Right ventricle myocardium inferior (tissue), 1 donor: ENCODE measurements at regions of chr7 and their contacts with region 1.

Region 1: GRCh38 chr7:130356121-130356875 is 11.7 kb downstream of the CPA5 start:
- DNase-seq: no peak
- ATAC-seq: peak; percentile 40

Region 2: GRCh38 chr7:130277763-130278643 is 78.3 kb before region 1 on chr7:
- intact Hi-C with region 1: loop called (anchors 5 kb)
- DNase-seq: no peak
- ATAC-seq: peak; percentile 64

Region 3: GRCh38 chr7:130430841-130431666 is 74.8 kb after region 1 on chr7:
- intact Hi-C with region 1: loop called (anchors 5 kb)
- DNase-seq: no peak
- ATAC-seq: no peak

Region 4: DNA sequence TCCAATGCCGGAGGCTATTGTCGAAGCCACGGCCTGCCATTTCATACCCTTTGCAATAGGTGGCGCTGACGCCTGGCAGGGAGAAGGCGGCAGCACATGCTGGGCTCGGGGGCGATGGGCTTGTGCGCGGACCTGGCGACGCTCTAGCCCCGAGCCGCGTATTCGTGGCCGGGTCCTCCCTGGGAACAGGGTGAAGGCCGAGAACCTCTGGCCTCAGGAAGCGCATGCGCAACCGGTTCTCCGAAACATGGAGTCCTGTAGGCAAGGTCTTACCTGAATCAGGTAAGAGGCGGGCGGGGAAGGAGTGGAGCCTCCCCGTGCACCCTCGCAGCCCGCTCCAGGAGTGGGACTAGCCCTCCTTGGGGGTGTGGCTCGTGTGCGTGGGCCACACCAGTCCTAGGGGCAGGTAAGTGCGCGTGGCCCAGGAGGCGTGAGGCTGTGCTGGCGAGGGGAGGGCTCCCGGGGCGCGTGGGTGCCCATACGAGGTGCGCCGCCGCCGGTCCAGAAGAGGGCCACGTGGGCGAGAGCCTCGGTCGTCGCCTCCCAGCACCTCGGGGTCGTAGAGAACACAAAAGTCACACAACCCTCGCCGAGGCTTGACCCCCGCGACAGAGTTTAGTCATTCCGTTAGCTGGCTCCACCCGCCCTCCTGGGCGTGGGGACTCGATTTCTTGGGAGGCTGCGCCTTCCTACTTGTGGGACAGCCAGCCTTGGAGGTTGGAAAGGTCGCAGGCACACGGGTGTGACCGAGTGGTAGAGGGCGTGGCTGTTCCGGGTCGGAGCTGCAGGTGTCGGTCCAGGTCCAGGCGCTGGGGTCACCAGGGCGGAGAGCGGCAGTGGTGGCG is 130.0 kb after region 1 on chr7:
- intact Hi-C with region 1: loop called (anchors 10 kb)
- DNase-seq: peak; percentile 79
- ATAC-seq: peak; percentile 62

Region 5: GRCh38 chr7:130970696-130971095 is 614.4 kb after region 1 on chr7:
- intact Hi-C with region 1: no loop called
- DNase-seq: no peak
- ATAC-seq: no peak